Posterior cingulate gyrus (tissue), 11 donors: ENCODE measurements at regions of chr18 and their contacts with region 1.

Region 1: GRCh38 chr18:41378598-41378997 is 576.4 kb upstream of the PIK3C3 start:
- DNase-seq: no peak

Region 2: GRCh38 chr18:40413160-40413559 is 965.4 kb before region 1 on chr18:
- intact Hi-C with region 1: loop called (anchors 10 kb)
- DNase-seq: peak in 8 of 10 donors; percentile 28 to 91 (median 52)

Region 3: GRCh38 chr18:41645589-41646360 is 267.2 kb after region 1 on chr18:
- intact Hi-C with region 1: no loop called
- DNase-seq: no peak

Region 4: DNA sequence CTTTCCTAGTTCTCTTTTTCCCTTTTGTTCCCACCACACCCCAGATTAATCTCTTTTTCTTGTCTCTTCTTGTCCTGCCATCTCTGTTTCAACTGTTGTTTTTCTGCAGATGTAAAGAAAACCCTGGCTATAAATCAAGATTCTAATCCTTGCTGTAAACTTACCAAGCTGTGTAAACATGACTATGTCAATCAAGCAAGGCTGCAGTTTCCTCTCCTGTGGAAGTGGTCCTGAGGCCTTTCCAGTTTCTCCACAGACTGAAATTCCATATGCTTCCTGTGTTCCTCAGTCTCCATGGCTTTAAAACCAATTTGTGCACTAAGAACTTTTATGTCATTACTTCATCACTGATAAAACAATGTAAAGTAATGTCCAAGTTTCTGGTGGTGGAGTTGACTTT is 287.6 kb after region 1 on chr18:
- intact Hi-C with region 1: no loop called
- DNase-seq: no peak